Cardiac septum (tissue), 1 donor: ENCODE measurements at regions of chr10 and their contacts with region 1.

Region 1: GRCh38 chr10:24197263-24197662 is 11.7 kb upstream of the KIAA1217 start:
- DNase-seq: no peak

Region 2: GRCh38 chr10:23994479-23995046 is 202.7 kb before region 1 on chr10:
- intact Hi-C with region 1: loop called (anchors 1 kb)
- DNase-seq: no peak

Region 3: GRCh38 chr10:24008164-24009091 is 188.8 kb before region 1 on chr10:
- intact Hi-C with region 1: loop called (anchors 5 kb)
- DNase-seq: no peak

Region 4: GRCh38 chr10:24039897-24040296 is 157.4 kb before region 1 on chr10:
- intact Hi-C with region 1: loop called (anchors 5 kb)
- DNase-seq: no peak

Region 5: GRCh38 chr10:24518981-24519597 is 321.8 kb after region 1 on chr10:
- intact Hi-C with region 1: loop called (anchors 5 kb)
- DNase-seq: no peak